B cell (primary cell): ENCODE measurements at regions of chr11 and their contacts with region 1.

Region 1: GRCh38 chr11:66677599-66678375 is at the start of gene RBM4B:
- DNase-seq: peak; percentile 99
- ATAC-seq: peak; percentile 91
- H3K4me3 ChIP-seq: peak within 1 kb of the TSS; percentile 86 to 95 (median 89)
- H3K4me3 Mint-ChIP-seq: peak within 1 kb of the TSS; percentile 99
- H3K27ac ChIP-seq: peak within 1 kb of the TSS; percentile 91 to 99
- H3K27ac Mint-ChIP-seq: peak within 1 kb of the TSS; percentile 99
- H3K4me1 ChIP-seq: peaks cover 24 to 35% of the 10 kb centered on the region in 2 donors
- H3K4me1 Mint-ChIP-seq: peaks cover 33% of the 10 kb centered on the region
- H3K27me3 ChIP-seq: no peaks in the 10 kb centered on the region
- H3K27me3 Mint-ChIP-seq: no peaks in the 10 kb centered on the region
- CTCF ChIP-seq: no peak
- total RNA-seq, gene RBM4B: 61.3 and 66.4 TPM in 2 replicates

Region 2: GRCh38 chr11:66421492-66422205 is 256.1 kb before region 1 on chr11:
- CTCF ChIA-PET with region 1: interaction called, 10 read pairs
- POLR2A ChIA-PET with region 1: no interaction called
- intact Hi-C with region 1: no loop called
- DNase-seq: peak; percentile 92
- ATAC-seq: peak; percentile 95
- H3K4me3 ChIP-seq: no peak overlapping the region
- H3K4me3 Mint-ChIP-seq: no peak overlapping the region
- H3K27ac ChIP-seq: no peak overlapping the region
- H3K27ac Mint-ChIP-seq: peak overlapping the region; percentile 81
- H3K4me1 ChIP-seq: peaks cover 8 to 15% of the 10 kb centered on the region in 2 donors
- H3K4me1 Mint-ChIP-seq: peaks cover 3% of the 10 kb centered on the region
- H3K27me3 ChIP-seq: peaks cover 0 to 45% (median 34%) of the 10 kb centered on the region in 4 experiments
- H3K27me3 Mint-ChIP-seq: peaks cover 31% of the 10 kb centered on the region
- CTCF ChIP-seq: no peak

Region 3: GRCh38 chr11:66510271-66510989 is 167.4 kb before region 1 on chr11 and contains the start of gene BBS1:
- CTCF ChIA-PET with region 1: interaction called, 15 read pairs
- POLR2A ChIA-PET with region 1: interaction called, 9 read pairs
- intact Hi-C with region 1: loop called (anchors 1 kb)
- DNase-seq: peak; percentile 87
- ATAC-seq: peak; percentile 94
- H3K4me3 ChIP-seq: peak within 1 kb of the TSS; percentile 55 to 89 (median 85)
- H3K4me3 Mint-ChIP-seq: peak within 1 kb of the TSS; percentile 91
- H3K27ac ChIP-seq: peak within 1 kb of the TSS in 1 of 2 donors; percentile 40
- H3K27ac Mint-ChIP-seq: peak within 1 kb of the TSS; percentile 61
- H3K4me1 ChIP-seq: peaks cover 11 to 14% of the 10 kb centered on the region in 2 donors
- H3K4me1 Mint-ChIP-seq: peaks cover 16% of the 10 kb centered on the region
- H3K27me3 ChIP-seq: no peaks in the 10 kb centered on the region
- H3K27me3 Mint-ChIP-seq: no peaks in the 10 kb centered on the region
- CTCF ChIP-seq: no peak
- total RNA-seq, gene BBS1: 52.5 and 56.3 TPM in 2 replicates

Region 4: DNA sequence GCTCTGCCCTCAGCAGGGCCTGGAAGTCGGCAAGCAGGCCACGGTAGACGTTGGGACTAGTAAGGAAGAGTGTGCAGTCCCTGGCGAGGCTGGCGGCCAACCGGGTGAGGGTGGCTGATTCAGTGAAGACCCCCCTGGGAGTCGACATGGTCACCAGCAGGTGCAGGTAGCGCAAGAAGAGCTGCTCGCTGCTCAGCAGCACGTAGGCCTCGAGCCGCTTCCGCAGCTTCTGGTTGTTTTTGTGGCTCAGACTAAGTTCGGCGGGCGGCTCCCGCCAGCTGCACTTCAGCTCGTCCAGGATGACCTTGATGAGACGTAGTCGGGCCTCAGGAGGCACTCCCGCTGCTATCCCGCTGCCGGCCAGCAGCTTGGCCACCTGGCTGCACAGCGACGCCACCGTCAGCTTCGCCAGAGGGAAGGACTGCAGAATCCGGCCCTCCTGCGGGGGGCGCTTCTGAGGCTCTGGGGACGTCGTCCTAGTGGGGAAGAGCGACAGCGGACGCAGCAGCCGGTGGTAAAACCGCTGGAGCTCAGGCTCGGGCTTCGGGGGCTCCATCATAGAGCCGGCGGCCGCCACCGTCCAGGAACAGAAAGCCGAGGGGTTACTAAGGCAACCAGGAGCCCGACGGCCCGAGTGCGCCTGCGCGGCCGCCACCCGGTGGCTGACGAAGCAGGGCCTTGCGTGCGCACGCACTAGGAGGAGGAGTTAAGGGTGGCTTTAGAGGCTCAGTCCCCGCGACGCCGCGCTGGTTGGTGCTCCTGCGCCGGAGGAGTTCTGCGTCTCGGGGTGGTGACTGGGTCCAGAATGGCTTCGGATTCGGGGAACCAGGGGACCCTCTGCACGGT is 85.1 kb before region 1 on chr11 and contains the starts of genes CCDC87 and CCS:
- CTCF ChIA-PET with region 1: interaction called, 46 read pairs
- POLR2A ChIA-PET with region 1: interaction called, 17 read pairs
- intact Hi-C with region 1: loop called (anchors 1 kb)
- DNase-seq: peak; percentile 96
- ATAC-seq: peak; percentile 95
- H3K4me3 ChIP-seq: peak within 1 kb of the TSS; percentile 63 to 84 (median 77)
- H3K4me3 Mint-ChIP-seq: peak within 1 kb of the TSS; percentile 100
- H3K27ac ChIP-seq: peak within 1 kb of the TSS; percentile 61 to 86
- H3K27ac Mint-ChIP-seq: peak within 1 kb of the TSS; percentile 99
- H3K4me1 ChIP-seq: peaks cover 28 to 29% of the 10 kb centered on the region in 2 donors
- H3K4me1 Mint-ChIP-seq: peaks cover 40% of the 10 kb centered on the region
- H3K27me3 ChIP-seq: no peaks in the 10 kb centered on the region
- H3K27me3 Mint-ChIP-seq: no peaks in the 10 kb centered on the region
- CTCF ChIP-seq: peak; percentile 77
- total RNA-seq, gene CCDC87: 0.17 and 0.39 TPM in 2 replicates
- total RNA-seq, gene CCS: 87.8 and 98.5 TPM in 2 replicates

Region 5: DNA sequence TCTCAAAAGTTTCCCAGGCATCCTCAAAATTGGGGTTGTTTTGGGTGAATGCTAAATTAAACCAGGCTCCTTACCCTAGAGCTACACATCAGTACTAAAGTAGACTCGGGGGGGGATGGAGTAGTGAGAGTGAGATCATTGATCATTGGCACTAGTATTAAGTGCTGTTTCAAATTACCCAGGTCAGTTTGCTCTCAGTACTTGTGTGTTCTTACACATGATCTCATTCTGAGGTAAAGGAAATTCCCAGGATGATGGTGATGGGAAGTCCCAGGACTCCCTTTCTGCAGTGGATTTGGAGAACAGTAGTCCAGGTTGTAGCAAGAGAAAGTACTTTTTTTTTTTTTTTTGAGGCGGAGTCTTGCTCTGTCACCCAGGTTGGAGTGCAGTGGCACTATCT is 26.8 kb before region 1 on chr11:
- CTCF ChIA-PET with region 1: interaction called, 11 read pairs
- POLR2A ChIA-PET with region 1: interaction called, 3 read pairs
- intact Hi-C with region 1: no loop called
- DNase-seq: no peak
- ATAC-seq: no peak
- H3K4me3 ChIP-seq: no peak overlapping the region
- H3K4me3 Mint-ChIP-seq: no peak overlapping the region
- H3K27ac ChIP-seq: no peak overlapping the region
- H3K27ac Mint-ChIP-seq: no peak overlapping the region
- H3K4me1 ChIP-seq: no peaks in the 10 kb centered on the region
- H3K4me1 Mint-ChIP-seq: peaks cover 33% of the 10 kb centered on the region
- H3K27me3 ChIP-seq: no peaks in the 10 kb centered on the region
- H3K27me3 Mint-ChIP-seq: no peaks in the 10 kb centered on the region
- CTCF ChIP-seq: no peak

Region 6: GRCh38 chr11:66752148-66752547 is 74.4 kb after region 1 on chr11:
- CTCF ChIA-PET with region 1: no interaction called
- POLR2A ChIA-PET with region 1: no interaction called
- intact Hi-C with region 1: no loop called
- DNase-seq: no peak
- ATAC-seq: no peak
- H3K4me3 ChIP-seq: no peak overlapping the region
- H3K4me3 Mint-ChIP-seq: no peak overlapping the region
- H3K27ac ChIP-seq: no peak overlapping the region
- H3K27ac Mint-ChIP-seq: no peak overlapping the region
- H3K4me1 ChIP-seq: no peaks in the 10 kb centered on the region
- H3K4me1 Mint-ChIP-seq: peaks cover 17% of the 10 kb centered on the region
- H3K27me3 ChIP-seq: no peaks in the 10 kb centered on the region
- H3K27me3 Mint-ChIP-seq: no peaks in the 10 kb centered on the region
- CTCF ChIP-seq: no peak